SK-N-SH (cell line): ENCODE measurements at regions of chr10 and their contacts with region 1.

Region 1: DNA sequence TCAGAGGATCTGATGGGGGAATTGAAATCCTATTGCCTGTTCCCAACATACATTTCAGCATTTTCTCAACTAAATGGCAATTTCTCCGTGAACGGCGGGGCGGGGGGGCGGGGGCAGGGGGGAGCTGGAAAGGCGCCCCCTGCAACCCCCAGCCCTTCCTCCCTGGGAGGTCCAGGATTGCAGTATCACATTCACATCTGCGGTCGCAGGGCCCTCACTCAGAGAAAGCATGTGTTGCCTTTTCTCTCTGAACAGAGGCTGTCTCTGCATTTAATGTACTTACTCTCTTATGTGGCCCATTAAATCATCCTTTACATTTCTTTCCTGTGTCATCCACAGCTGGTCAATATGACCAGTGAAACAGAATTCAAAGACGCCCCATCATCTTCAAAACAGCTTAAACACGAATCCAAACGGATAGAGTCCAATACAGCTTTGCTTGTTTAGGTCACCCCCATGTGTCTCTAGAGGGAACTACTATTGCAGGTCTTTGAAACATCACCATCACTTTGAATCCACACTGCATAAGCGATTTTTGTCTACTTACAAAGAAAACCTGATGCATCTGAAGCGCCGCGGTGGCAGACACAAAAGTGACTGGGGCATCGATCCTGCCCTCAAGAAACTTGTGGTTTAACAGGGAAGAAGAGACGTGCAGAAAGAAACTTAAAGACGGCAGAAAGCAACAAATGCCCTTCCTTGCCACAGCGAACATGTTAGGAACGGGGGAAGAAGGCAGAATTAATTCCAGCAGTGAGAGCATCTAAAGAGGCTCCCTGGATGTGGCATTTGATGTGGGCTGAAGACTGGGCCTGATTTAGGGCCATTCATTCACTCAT is 17.0 kb upstream of the ECHDC3 start:
- DNase-seq: peak; percentile 78
- H3K4me3 ChIP-seq: no peak overlapping the region
- H3K27ac ChIP-seq: no peak overlapping the region
- H3K4me1 ChIP-seq: no peaks in the 10 kb centered on the region; a peak in 1 of 4 replicates
- H3K27me3 ChIP-seq: no peaks in the 10 kb centered on the region
- CTCF ChIP-seq: peak; percentile 80
- EP300 ChIP-seq: no peak
- RAD21 ChIP-seq: peak; percentile 92

Region 2: DNA sequence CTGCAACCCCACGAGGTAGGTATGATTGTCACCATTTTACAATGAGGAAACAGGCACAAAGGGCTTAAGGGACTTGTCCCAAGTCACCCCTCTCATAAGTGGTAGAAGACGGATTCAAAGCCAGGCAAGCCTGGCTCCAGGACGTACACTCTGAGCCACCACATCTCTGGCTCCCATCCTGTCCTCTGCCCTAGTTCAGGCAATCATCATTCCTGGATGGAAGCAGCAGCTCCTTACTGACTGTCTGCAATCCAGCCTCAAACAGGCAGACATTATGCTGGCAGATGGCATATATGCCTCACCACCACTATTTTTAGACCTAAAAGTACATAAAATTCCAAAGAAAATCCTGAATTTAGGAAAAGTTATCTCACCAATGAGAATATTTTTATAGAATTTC is 214.4 kb before region 1 on chr10:
- CTCF ChIA-PET with region 1: interaction called, 66 read pairs
- POLR2A ChIA-PET with region 1: no interaction called
- DNase-seq: no peak
- H3K4me3 ChIP-seq: no peak overlapping the region
- H3K27ac ChIP-seq: no peak overlapping the region
- H3K4me1 ChIP-seq: peaks cover 0 to 4% of the 10 kb centered on the region in 2 experiments; a peak in 3 of 4 replicates
- H3K27me3 ChIP-seq: no peaks in the 10 kb centered on the region
- CTCF ChIP-seq: no peak
- EP300 ChIP-seq: no peak
- RAD21 ChIP-seq: no peak

Region 3: DNA sequence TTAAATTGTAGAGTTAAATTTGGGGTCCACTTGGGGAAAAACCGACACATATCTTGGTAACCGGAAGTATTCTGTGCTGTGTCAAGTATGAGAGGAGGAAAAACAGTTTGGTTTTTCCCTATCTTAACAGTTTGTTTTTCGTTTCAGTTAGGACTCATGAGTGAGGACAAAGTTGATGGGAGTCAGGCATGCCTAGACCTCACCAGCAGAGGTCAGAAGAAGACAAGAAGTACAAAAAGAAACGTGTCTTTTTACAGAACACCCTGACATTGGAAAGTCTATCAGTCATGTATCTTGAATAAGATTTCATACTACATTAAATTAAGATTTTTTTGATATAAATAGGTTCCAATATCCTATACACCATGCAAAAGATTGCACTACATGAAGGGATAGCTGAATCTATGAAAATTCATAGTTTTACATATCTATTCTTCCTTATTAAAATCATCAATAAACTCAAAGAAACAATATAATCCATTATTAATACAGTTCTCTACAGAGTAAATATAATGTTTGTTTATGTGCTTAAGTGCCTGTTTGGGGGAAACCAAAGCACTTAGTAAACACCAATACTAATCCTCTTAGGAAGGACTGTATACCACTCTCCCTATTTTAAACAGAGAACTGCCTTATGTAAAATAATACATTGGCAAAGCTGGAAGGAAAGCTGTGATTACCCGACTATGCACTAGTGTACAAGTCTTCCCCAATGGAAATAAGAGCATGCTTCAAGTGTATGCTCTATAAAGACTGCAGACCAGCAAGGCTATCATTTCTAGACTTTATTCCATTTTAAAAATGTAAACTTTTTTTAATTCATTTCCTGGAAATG is 209.3 kb before region 1 on chr10:
- CTCF ChIA-PET with region 1: interaction called, 66 read pairs
- POLR2A ChIA-PET with region 1: no interaction called
- DNase-seq: peak; percentile 55
- H3K4me3 ChIP-seq: no peak overlapping the region; a peak in 1 of 4 replicates
- H3K27ac ChIP-seq: no peak overlapping the region
- H3K4me1 ChIP-seq: peaks cover under 1 to 11% of the 10 kb centered on the region in 2 experiments; a peak in 3 of 4 replicates
- H3K27me3 ChIP-seq: no peaks in the 10 kb centered on the region
- CTCF ChIP-seq: peak; percentile 91
- EP300 ChIP-seq: no peak
- RAD21 ChIP-seq: peak; percentile 98

Region 4: DNA sequence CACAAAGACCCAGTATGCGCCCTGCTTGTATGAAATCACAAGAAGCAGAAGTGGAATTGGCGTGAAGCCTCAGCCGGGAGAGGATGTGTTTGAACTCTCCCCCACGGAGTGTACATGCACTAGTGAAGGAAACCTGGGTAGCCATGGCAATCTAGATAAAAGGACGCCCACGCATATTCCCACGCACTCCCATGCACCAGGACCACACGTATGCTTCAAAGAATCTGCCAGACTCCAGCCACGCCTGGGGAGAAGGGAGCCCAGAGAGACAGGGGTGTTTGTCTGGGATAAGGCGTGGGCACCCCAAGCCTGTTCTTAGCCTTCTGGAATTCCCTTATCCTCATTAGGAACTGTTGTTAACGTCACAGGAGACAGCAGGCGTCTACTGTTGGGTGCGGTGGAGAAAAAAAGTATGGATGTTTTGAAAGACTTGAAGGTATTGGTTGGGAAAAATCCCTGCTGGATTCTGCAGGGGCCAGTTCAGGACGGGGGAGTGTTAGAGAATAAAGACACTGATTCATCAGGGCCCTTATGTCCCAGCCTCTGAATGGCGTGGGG is 11.9 kb before region 1 on chr10:
- CTCF ChIA-PET with region 1: interaction called, 11 read pairs
- POLR2A ChIA-PET with region 1: no interaction called
- DNase-seq: no peak
- H3K4me3 ChIP-seq: no peak overlapping the region
- H3K27ac ChIP-seq: no peak overlapping the region
- H3K4me1 ChIP-seq: no peaks in the 10 kb centered on the region
- H3K27me3 ChIP-seq: no peaks in the 10 kb centered on the region; the same call in 1 of the 2 replicates
- CTCF ChIP-seq: no peak
- EP300 ChIP-seq: no peak
- RAD21 ChIP-seq: no peak